Activated T-helper 2 cell treated with anti-CD3 and anti-CD28 coated beads, Interferon-gamma antibody, Interleukin-2, Interleukin-4, amounts not matched to agents 10 μg/mL and 5 μg/mL and 100 μg/mL, durations not matched to agents 14 hours and 24 hours and 36 hours (primary cell): ENCODE measurements at regions of chr2 and their contacts with region 1.

Region 1: DNA sequence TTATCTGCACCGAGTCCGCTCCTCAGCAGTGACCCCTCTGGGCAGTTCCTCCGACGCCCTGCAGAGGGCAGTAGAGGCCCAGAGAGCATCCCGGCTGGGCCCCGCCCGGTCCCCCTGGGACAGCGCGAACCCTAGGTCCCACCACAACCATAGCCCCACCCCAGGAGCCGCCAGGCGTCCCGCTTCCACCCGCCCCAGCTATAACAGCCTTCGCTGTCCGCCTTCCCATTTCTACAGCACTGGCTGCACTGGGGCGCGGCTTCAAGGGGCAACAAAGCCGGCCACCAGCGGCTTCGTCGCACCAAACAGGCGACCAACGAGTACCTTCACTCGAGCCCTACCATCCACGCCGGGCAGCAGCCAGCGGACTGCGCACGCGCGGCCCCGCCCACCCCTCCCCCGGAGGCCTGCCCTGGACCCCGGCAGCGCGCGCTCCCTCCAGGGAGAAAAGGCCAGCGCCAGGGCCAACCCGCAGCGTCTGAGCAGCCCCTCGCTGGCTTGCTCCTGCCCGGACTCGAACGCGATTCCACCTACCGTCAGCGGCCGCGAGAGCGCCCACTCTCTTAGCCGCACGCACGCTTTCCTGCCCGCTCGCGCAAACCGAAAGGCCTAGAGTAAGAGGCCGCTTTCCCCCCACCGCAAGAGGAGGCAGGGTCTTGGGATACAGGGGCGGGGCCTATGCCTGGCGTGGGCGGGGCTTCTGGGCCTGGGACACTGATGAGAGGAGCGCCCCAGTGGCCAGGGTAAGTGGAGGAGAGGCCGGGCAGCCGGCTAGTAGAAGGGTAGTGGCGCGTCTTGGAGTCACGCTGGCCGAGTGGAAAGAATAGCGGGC is at the start of gene NHEJ1:
- DNase-seq: peak; percentile 90
- H3K4me3 Mint-ChIP-seq: peak within 1 kb of the TSS; percentile 87
- H3K27ac Mint-ChIP-seq: peak within 1 kb of the TSS; percentile 93
- H3K4me1 Mint-ChIP-seq: peaks cover 17% of the 10 kb centered on the region
- H3K27me3 Mint-ChIP-seq: no peaks in the 10 kb centered on the region
- total RNA-seq, gene NHEJ1: 15.9 and 22.9 TPM in 2 replicates

Region 2: GRCh38 chr2:219133976-219134375 is 26.4 kb before region 1 on chr2:
- intact Hi-C with region 1: no loop called
- DNase-seq: no peak
- H3K4me3 Mint-ChIP-seq: no peak overlapping the region
- H3K27ac Mint-ChIP-seq: no peak overlapping the region
- H3K4me1 Mint-ChIP-seq: peaks cover 6% of the 10 kb centered on the region
- H3K27me3 Mint-ChIP-seq: no peaks in the 10 kb centered on the region

Region 3: GRCh38 chr2:219218732-219219701 is 58.6 kb after region 1 on chr2 and contains the start of gene ABCB6:
- intact Hi-C with region 1: loop called (anchors 2 kb)
- DNase-seq: peak; percentile 81
- H3K4me3 Mint-ChIP-seq: peak within 1 kb of the TSS; percentile 82
- H3K27ac Mint-ChIP-seq: peak within 1 kb of the TSS; percentile 55
- H3K4me1 Mint-ChIP-seq: peaks cover 22% of the 10 kb centered on the region
- H3K27me3 Mint-ChIP-seq: no peaks in the 10 kb centered on the region
- total RNA-seq, gene ABCB6: 22.1 and 25.4 TPM in 2 replicates

Region 4: GRCh38 chr2:219253753-219254590 is 93.6 kb after region 1 on chr2 and contains the start of gene TUBA4A:
- intact Hi-C with region 1: loop called (anchors 1 kb)
- DNase-seq: peak; percentile 84
- H3K4me3 Mint-ChIP-seq: peak within 1 kb of the TSS; percentile 77
- H3K27ac Mint-ChIP-seq: peak within 1 kb of the TSS; percentile 92
- H3K4me1 Mint-ChIP-seq: peaks cover 46% of the 10 kb centered on the region
- H3K27me3 Mint-ChIP-seq: no peaks in the 10 kb centered on the region
- total RNA-seq, gene TUBA4A: 220 and 231 TPM in 2 replicates

Region 5: DNA sequence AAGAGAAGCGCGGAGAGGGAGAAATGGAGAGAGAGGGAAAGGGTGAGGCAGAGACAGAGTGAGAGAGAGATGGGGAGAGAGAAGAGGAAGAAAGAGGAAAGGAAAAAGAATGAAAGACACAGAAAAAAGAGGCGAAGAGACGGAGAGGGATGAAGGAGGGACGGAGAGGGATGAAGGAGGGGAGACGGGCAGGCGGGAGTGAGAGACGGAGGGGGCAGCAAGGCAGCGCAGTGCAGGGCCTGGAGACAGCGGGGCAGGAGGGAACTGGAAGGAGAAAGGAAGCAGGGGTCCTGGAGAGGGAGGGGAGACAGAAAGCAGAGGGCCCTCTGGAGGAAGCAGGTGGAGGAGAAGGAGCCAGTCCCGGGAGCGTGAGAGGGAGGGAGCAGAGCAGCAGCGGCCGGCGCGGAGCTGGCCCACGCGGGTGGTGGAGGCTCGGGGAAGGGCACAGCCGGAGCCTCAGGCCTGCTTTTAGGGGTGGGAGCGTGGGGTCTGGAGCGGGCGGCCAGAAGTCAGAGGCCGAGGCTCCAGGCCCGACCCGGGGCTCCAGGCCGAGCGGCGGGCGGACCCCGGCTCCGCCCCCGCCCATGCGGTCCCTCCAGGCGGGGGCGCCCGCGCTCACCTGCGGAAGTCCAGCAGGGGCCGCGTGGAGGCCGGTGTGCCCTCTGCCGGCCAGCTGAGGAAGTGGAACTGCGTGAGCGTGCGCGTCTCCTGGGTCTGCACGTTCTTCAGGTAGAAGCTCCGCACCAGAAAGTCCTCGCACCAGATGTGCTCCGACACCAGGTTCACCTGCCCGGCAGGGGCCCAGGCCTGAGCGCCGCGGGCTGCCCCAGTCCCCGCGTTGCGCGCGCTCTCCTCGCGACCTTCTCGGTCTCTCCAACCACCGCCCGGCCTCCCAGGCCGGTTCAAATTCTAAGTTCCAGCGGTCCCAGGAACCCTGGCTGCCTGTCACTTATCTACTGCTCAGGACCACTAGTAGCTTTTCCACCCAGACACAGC is 134.3 kb after region 1 on chr2:
- intact Hi-C with region 1: loop called (anchors 1 kb)
- DNase-seq: peak; percentile 85
- H3K4me3 Mint-ChIP-seq: peak overlapping the region; percentile 79
- H3K27ac Mint-ChIP-seq: peak overlapping the region; percentile 87
- H3K4me1 Mint-ChIP-seq: peaks cover 11% of the 10 kb centered on the region
- H3K27me3 Mint-ChIP-seq: peaks cover 1% of the 10 kb centered on the region

Region 6: DNA sequence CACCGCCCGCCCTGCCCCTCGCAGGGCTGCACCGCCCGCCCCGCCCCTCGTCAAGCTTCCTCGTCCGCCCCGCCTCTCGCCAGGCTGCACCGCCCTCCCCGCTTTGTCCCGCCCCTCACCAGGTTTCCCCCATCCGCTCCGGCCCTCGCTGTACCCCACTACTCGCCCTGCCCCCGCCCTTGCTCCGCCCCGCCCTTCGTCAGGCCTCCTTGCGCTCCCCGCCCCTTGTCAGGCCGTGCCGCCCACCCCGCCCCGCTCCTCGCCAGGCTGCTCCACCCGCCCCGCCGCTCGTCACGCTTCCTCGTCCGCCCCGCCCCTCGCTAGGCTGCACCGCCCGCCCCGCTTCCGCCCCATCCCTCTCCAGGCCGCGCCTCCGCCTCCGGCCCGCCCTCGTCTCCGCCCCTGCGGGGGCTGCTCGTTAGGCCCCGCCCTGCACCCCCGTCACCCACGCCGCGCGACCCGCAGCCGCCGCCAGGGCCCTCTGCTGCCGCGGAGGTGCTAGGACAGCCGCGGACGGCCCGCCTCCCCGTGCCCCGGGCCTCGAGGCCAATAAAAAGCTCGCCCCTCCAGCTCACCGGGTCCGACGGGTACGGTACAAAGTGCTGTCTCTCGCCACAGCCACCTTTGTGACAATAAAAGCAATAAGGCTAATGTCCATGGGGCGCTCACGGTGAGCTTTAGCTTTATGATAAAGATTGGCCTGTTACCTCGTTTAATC is 227.9 kb after region 1 on chr2:
- intact Hi-C with region 1: loop called (anchors 1 kb)
- DNase-seq: peak; percentile 96
- H3K4me3 Mint-ChIP-seq: peak overlapping the region; percentile 65
- H3K27ac Mint-ChIP-seq: peak overlapping the region; percentile 75
- H3K4me1 Mint-ChIP-seq: peaks cover 7% of the 10 kb centered on the region
- H3K27me3 Mint-ChIP-seq: peaks cover 8% of the 10 kb centered on the region